Activated naive CD4-positive, alpha-beta T cell treated with anti-CD3 and anti-CD28 coated beads for 36 hours (primary cell): ENCODE measurements at regions of chr14 and their contacts with region 1.

Region 1: DNA sequence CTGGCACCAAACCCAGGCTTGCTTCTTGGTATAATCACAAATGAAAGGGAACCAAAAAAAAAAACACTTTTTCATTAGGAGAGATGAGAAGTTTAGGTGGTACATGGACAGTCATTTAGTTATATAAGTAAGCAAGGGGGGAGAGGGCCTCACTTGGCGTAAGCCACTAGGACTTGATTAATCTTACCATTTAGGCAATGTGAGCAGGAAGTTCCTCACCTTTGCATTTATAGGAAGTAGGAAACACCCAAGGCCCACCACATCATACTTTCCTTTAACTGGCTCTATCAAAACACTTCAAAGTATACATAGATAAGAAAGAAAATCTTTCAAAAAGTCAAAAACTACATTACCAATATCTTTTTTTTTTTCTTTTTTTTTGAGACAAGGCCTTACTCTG is 6.7 kb upstream of the RPS6KA5 start:
- DNase-seq: peak; percentile 82
- H3K4me3 Mint-ChIP-seq: no peak overlapping the region
- H3K27ac Mint-ChIP-seq: peak overlapping the region; percentile 88
- H3K4me1 Mint-ChIP-seq: peaks cover 68% of the 10 kb centered on the region
- H3K27me3 Mint-ChIP-seq: no peaks in the 10 kb centered on the region

Region 2: GRCh38 chr14:90513161-90514014 is 553.8 kb before region 1 on chr14:
- CTCF ChIA-PET with region 1: no interaction called
- intact Hi-C with region 1: no loop called
- DNase-seq: no peak
- H3K4me3 Mint-ChIP-seq: no peak overlapping the region
- H3K27ac Mint-ChIP-seq: no peak overlapping the region
- H3K4me1 Mint-ChIP-seq: peaks cover 2% of the 10 kb centered on the region
- H3K27me3 Mint-ChIP-seq: peaks cover 16% of the 10 kb centered on the region

Region 3: GRCh38 chr14:91055016-91055415 is 12.2 kb before region 1 on chr14:
- CTCF ChIA-PET with region 1: no interaction called
- intact Hi-C with region 1: no loop called
- DNase-seq: no peak
- H3K4me3 Mint-ChIP-seq: no peak overlapping the region
- H3K27ac Mint-ChIP-seq: no peak overlapping the region
- H3K4me1 Mint-ChIP-seq: peaks cover 32% of the 10 kb centered on the region
- H3K27me3 Mint-ChIP-seq: no peaks in the 10 kb centered on the region

Region 4: DNA sequence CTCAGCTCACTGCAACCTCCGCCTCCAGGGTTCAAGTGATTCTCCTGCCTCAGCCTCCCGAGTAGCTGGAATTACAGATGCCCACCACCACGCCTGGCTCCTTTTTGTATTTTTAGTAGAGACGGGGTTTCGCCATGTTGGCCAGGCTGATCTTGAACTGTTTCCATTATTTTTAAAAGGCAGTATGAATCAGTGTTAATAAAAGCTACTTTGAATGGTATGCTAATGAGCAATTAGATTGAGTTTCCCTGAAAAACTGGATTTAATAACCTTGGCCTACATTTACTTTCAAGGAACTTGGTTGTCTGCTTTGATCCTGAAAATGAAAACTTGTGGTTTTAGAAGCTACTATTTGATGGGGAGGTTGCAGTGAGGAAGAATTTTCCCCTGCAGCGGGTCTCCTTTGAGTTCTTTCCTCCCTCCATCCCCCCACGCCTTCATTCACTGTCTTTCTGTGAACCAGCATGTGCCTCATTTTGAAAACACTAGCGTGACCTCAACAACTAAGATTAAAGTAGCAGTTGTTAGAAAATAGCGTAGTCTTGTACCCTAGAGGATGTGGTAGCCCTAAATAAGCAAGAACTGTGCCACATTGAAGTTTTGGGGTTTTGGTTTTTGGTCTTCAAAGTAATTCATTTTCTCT is 11.0 kb after region 1 on chr14:
- CTCF ChIA-PET with region 1: interaction called, 4 read pairs
- intact Hi-C with region 1: loop called (anchors 1 kb)
- DNase-seq: peak; percentile 77
- H3K4me3 Mint-ChIP-seq: no peak overlapping the region
- H3K27ac Mint-ChIP-seq: peak overlapping the region; percentile 39
- H3K4me1 Mint-ChIP-seq: peaks cover 29% of the 10 kb centered on the region
- H3K27me3 Mint-ChIP-seq: peaks cover 3% of the 10 kb centered on the region